ENCODE measurements at regions of chr19 and their contacts with region 1.

Region 1: DNA sequence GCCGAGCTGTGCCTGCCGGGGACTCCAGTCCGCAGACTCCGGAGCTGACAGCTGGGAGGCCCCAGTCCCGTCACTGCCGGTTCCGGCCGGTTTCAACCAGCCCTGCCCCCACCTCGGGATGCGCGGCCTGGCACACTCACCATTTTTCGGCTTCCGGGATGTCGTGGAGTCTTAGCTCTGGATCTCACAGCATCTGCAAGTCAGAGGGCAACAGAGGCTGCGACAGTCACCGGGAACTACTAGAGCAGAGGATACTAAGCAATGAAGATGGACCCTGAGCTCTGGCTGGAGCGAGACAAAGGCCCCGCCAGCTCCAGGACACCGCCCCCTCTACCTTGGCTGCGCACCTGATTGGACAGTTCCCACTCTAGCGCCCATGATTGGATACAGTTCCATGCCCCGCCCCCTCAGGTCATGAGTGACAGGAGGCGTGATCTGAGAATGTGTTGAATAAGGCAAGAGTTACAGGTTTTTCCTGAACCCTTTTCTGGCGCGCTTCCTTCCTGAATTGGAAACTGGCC is at the start of gene ZNF682:
- DNase-seq: peak; percentile 89 to 96 (median 92)
- ATAC-seq: peak; percentile 98
- H3K4me3 ChIP-seq: peak within 1 kb of the TSS; percentile 95
- H3K4me3 Mint-ChIP-seq: peak within 1 kb of the TSS; percentile 98
- H3K27ac ChIP-seq: peak within 1 kb of the TSS; percentile 72 to 77
- H3K27ac Mint-ChIP-seq: peak within 1 kb of the TSS; percentile 96
- H3K4me1 ChIP-seq: peaks cover 11% of the 10 kb centered on the region
- H3K4me1 Mint-ChIP-seq: peaks cover 19% of the 10 kb centered on the region
- H3K27me3 ChIP-seq: peaks cover 0 to 4% of the 10 kb centered on the region in 2 experiments
- H3K27me3 Mint-ChIP-seq: peaks cover 5% of the 10 kb centered on the region
- CTCF ChIP-seq: no peak
- total RNA-seq, gene ZNF682: 12.5 to 16.0 TPM

Region 2: GRCh38 chr19:19865739-19866481 is 173.4 kb before region 1 on chr19 and contains the start of gene ZNF253:
- CTCF ChIA-PET with region 1: no interaction called
- POLR2A ChIA-PET with region 1: interaction called, 13 read pairs
- intact Hi-C with region 1: no loop called
- DNase-seq: peak; percentile 88 to 96 (median 94)
- ATAC-seq: peak; percentile 90
- H3K4me3 ChIP-seq: peak within 1 kb of the TSS; percentile 89
- H3K4me3 Mint-ChIP-seq: peak within 1 kb of the TSS; percentile 97
- H3K27ac ChIP-seq: peak within 1 kb of the TSS; percentile 86 to 88
- H3K27ac Mint-ChIP-seq: peak within 1 kb of the TSS; percentile 97
- H3K4me1 ChIP-seq: peaks cover 13% of the 10 kb centered on the region
- H3K4me1 Mint-ChIP-seq: peaks cover 41% of the 10 kb centered on the region
- H3K27me3 ChIP-seq: no peaks in the 10 kb centered on the region
- H3K27me3 Mint-ChIP-seq: no peaks in the 10 kb centered on the region
- CTCF ChIP-seq: no peak
- total RNA-seq, gene ZNF253: 4.9 to 5.2 TPM

Region 3: DNA sequence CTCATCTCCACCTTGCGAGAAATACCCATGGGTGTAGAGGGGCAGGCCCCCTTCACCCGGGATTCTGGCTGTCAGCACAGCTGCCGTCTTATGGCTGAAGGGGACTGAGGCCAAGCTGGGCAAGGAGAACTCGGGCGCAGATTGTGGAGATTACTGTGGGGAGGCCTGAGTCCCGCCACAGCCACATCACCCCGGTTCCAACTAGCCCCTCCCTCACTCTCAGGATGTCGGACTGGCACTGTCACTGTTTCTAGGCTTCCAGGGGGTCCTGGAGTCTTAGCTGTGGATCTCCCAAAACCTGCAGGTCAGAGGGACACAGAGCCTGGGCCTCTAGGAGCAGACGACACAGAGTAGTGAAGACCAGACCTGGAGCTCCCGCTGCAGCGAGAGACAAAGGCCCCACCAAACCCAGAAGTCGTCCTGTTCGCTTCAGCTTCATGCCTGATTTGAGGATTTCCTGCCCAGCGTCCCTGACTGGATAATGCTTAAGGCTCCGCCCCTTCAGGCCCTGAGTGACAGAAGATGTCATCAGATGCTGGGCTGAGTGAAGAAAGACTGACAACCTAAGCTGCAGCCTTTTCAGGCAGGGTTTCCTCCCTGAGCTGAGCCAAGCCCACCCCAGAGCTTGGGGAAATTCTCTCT is 82.7 kb before region 1 on chr19:
- CTCF ChIA-PET with region 1: no interaction called
- POLR2A ChIA-PET with region 1: no interaction called
- intact Hi-C with region 1: no loop called
- DNase-seq: no peak
- ATAC-seq: no peak
- H3K4me3 ChIP-seq: no peak overlapping the region
- H3K4me3 Mint-ChIP-seq: no peak overlapping the region
- H3K27ac ChIP-seq: no peak overlapping the region
- H3K27ac Mint-ChIP-seq: no peak overlapping the region
- H3K4me1 ChIP-seq: peaks cover 6% of the 10 kb centered on the region
- H3K4me1 Mint-ChIP-seq: no peaks in the 10 kb centered on the region
- H3K27me3 ChIP-seq: no peaks in the 10 kb centered on the region
- H3K27me3 Mint-ChIP-seq: no peaks in the 10 kb centered on the region
- CTCF ChIP-seq: no peak

Region 4: DNA sequence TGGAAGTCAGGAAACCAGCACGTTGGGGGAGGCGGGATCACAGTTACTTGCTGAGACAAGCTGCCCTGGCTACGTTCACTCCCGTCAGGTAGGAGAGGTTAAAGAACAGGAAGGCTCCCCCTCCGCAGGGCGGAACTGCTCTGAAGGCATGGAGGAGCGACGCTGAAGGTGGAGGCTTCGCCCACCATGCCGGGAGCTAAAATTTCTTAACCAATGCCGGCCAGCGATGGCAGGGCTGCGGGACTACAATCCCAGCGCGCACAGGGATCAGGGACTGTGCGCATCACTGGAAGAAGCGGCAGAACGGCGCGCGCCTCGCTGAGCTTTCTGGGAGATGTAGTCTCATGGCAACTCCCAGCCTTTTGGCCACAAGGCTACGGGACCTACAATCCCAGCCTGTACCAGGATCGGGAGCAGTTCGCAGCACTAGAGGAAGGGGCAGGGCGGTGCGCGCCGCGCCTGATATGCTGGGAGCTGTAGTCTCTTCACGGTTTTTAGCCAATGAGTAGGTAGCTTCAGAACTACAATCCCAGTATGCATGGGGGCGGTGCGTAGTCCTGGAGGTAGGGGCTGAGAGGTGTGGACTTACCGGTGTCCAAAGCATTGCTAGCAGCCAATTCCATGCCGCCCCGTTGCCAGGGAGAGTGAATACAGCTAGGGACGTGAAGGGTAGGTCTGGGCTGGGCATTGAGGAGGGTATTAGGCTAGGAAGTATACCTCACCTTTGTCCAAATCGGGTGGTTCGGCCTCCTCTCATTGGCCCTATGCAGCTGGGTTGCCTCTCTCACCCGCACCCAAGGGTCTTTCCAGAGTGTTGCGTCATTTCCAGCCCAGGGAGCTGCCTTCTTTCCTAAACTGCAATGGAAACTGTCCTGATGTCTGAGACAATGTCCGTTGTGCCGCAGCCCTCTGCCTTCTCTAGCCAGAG is 12.8 kb after region 1 on chr19:
- CTCF ChIA-PET with region 1: no interaction called
- POLR2A ChIA-PET with region 1: interaction called, 49 read pairs
- intact Hi-C with region 1: loop called in 1 of 2 experiments (anchors 2 kb)
- DNase-seq: peak; percentile 29 to 77 (median 50)
- ATAC-seq: peak; percentile 93
- H3K4me3 ChIP-seq: peak overlapping the region; percentile 95
- H3K4me3 Mint-ChIP-seq: peak overlapping the region; percentile 99
- H3K27ac ChIP-seq: peak overlapping the region; percentile 67 to 73
- H3K27ac Mint-ChIP-seq: peak overlapping the region; percentile 90
- H3K4me1 ChIP-seq: peaks cover 15% of the 10 kb centered on the region
- H3K4me1 Mint-ChIP-seq: peaks cover 18% of the 10 kb centered on the region
- H3K27me3 ChIP-seq: no peaks in the 10 kb centered on the region
- H3K27me3 Mint-ChIP-seq: peaks cover 4% of the 10 kb centered on the region
- CTCF ChIP-seq: no peak

Region 5: GRCh38 chr19:20077791-20078463 is 38.7 kb after region 1 on chr19 and contains the start of gene ZNF90:
- CTCF ChIA-PET with region 1: no interaction called
- POLR2A ChIA-PET with region 1: interaction called, 24 read pairs
- intact Hi-C with region 1: loop called (anchors 1 to 5 kb)
- DNase-seq: peak; percentile 69 to 94 (median 80)
- ATAC-seq: peak; percentile 100
- H3K4me3 ChIP-seq: peak within 1 kb of the TSS; percentile 60
- H3K4me3 Mint-ChIP-seq: peak within 1 kb of the TSS; percentile 92
- H3K27ac ChIP-seq: no peak within 1 kb of the TSS
- H3K27ac Mint-ChIP-seq: peak within 1 kb of the TSS; percentile 55
- H3K4me1 ChIP-seq: peaks cover 14% of the 10 kb centered on the region
- H3K4me1 Mint-ChIP-seq: peaks cover 20% of the 10 kb centered on the region
- H3K27me3 ChIP-seq: no peaks in the 10 kb centered on the region
- H3K27me3 Mint-ChIP-seq: no peaks in the 10 kb centered on the region
- CTCF ChIP-seq: no peak
- total RNA-seq, gene ZNF90: 2.9 to 3.7 TPM

Region 6: DNA sequence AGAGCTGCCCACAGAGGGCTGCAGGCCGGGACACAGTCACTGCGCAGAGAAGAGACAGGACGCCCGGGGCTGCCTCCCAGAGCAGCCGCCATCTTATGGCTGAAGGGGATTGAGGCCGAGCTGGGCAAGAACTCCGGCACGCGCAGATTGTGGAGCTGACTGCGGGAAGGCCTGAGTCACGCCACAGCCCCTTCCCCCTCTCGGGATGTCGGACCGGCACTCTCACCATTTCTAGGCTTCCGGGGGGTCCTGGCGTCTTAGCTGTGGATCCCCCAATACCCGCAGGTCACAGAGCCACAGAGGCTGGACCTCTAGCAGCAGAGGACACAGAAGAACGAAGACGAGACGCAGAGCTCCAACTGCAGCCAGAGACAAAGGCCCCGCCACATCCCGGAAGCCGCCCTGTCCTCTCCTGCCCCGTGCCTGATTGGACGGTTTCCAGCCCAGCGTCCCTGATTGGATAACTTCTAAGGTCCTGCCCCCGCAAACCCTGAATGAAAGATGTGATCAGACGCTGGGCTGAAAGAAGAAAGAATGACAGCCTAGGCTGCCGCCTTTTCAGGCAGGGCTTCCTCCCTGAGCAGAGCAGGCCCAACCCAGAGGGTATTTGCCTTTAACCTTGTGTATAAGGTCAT is 1796.7 kb after region 1 on chr19 and contains the start of gene ZNF43:
- CTCF ChIA-PET with region 1: no interaction called
- POLR2A ChIA-PET with region 1: no interaction called
- intact Hi-C with region 1: loop called in 1 of 2 experiments (anchors 10 kb)
- DNase-seq: peak; percentile 87 to 97 (median 91)
- ATAC-seq: peak; percentile 98
- H3K4me3 ChIP-seq: peak within 1 kb of the TSS; percentile 81
- H3K4me3 Mint-ChIP-seq: peak within 1 kb of the TSS; percentile 97
- H3K27ac ChIP-seq: peak within 1 kb of the TSS; percentile 82 to 83
- H3K27ac Mint-ChIP-seq: peak within 1 kb of the TSS; percentile 94
- H3K4me1 ChIP-seq: peaks cover 14% of the 10 kb centered on the region
- H3K4me1 Mint-ChIP-seq: peaks cover 33% of the 10 kb centered on the region
- H3K27me3 ChIP-seq: no peaks in the 10 kb centered on the region
- H3K27me3 Mint-ChIP-seq: no peaks in the 10 kb centered on the region
- CTCF ChIP-seq: no peak
- total RNA-seq, gene ZNF43: 26.1 to 30.2 TPM

Measured in CD4-positive, alpha-beta T cell (primary cell).